Esophagus muscularis mucosa (tissue), 4 donors: ENCODE measurements at regions of chr15 and their contacts with region 1.

Region 1: DNA sequence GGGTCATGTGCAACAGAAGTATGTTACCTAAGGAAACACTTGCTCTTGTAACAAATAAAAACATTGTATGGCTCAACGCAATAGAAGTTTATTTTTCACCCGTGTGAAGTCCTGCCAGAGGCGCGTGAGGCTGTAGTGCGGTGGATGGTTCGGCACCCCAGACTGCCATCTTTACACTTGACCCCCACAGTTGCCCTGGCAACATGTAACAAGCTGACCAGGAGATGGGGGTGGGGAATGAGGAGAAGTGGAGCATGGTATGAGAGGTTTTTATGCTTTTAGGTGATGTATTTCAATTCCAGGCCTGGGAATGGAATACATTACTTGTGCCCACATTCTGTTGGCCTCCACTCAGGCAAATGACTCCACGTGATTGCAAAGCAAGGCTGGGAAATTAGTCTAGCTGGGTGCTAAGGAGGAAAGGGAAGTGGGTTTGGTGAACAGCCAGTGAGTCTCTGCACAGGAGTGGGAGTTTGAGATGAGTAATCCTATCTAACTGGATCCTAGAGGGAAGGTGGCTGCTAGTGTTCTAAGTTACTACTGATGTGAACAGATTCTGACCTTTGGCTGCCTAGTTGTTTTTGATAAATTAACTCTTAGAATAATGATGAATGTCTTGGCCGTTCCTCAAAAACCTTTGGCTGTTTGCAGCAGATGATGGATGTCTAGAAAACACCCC is 33.8 kb upstream of the GREM1 start:
- DNase-seq: no peak
- H3K4me3 ChIP-seq: no peak overlapping the region
- H3K27ac ChIP-seq: no peak overlapping the region
- H3K4me1 ChIP-seq: peaks cover 0 to 16% (median 7%) of the 10 kb centered on the region in 4 donors
- H3K27me3 ChIP-seq: no peaks in the 10 kb centered on the region
- CTCF ChIP-seq: no peak
- EP300 ChIP-seq: no peak
- POLR2A ChIP-seq: no peak

Region 2: DNA sequence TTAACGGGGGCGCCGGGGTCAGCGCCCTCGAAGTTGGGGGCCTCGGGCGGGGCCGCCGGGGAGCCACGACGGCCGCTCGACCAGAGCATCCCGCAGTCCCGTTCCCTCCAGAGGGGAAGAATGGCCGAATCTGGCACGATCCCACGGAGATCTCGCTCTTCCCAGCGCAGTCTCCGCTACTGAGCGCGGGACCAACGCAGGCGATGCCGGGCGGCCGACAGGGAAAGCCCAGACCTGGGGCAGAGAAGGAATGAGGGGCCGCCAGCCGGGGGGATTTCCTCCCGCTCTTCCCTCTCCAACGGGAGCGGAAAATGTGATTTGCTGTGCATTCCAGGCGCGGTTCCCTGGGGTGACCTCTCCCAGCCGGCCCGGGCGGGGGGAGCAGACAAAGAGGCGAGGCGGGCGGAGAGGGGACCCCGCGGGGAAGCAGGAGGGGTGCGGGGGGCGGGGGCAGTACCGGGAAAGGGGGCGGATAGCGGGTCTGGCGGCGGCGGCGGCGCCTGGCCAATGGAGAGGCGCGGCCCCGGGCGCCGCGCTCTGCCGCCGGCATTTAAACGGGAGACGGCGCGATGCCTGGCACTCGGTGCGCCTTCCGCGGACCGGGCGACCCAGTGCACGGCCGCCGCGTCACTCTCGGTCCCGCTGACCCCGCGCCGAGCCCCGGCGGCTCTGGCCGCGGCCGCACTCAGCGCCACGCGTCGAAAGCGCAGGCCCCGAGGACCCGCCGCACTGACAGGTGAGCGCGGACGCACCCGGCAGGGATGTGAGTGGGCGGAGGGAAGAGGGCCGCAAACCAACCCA is 33.6 kb after region 1 on chr15 and contains the start of gene GREM1:
- intact Hi-C with region 1: loop called (anchors 5 kb)
- DNase-seq: no peak
- H3K4me3 ChIP-seq: peak within 1 kb of the TSS; percentile 51 to 75 (median 61)
- H3K27ac ChIP-seq: peak within 1 kb of the TSS; percentile 71 to 80 (median 78)
- H3K4me1 ChIP-seq: peaks cover 10 to 40% (median 34%) of the 10 kb centered on the region in 4 donors
- H3K27me3 ChIP-seq: peaks cover 0 to 61% (median 11%) of the 10 kb centered on the region in 4 donors
- CTCF ChIP-seq: no peak
- EP300 ChIP-seq: no peak
- POLR2A ChIP-seq: no peak
- total RNA-seq, gene GREM1: 8.6 to 46.1 (median 37.0) TPM

Region 3: DNA sequence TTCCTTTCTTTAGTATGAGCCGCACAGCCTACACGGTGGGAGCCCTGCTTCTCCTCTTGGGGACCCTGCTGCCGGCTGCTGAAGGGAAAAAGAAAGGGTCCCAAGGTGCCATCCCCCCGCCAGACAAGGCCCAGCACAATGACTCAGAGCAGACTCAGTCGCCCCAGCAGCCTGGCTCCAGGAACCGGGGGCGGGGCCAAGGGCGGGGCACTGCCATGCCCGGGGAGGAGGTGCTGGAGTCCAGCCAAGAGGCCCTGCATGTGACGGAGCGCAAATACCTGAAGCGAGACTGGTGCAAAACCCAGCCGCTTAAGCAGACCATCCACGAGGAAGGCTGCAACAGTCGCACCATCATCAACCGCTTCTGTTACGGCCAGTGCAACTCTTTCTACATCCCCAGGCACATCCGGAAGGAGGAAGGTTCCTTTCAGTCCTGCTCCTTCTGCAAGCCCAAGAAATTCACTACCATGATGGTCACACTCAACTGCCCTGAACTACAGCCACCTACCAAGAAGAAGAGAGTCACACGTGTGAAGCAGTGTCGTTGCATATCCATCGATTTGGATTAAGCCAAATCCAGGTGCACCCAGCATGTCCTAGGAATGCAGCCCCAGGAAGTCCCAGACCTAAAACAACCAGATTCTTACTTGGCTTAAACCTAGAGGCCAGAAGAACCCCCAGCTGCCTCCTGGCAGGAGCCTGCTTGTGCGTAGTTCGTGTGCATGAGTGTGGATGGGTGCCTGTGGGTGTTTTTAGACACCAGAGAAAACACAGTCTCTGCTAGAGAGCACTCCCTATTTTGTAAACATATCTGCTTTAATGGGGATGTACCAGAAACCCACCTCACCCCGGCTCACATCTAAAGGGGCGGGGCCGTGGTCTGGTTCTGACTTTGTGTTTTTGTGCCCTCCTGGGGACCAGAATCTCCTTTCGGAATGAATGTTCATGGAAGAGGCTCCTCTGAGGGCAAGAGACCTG is 46.9 kb after region 1 on chr15:
- intact Hi-C with region 1: no loop called
- DNase-seq: no peak
- H3K4me3 ChIP-seq: no peak overlapping the region
- H3K27ac ChIP-seq: no peak overlapping the region
- H3K4me1 ChIP-seq: peaks cover 0 to 5% (median 0%) of the 10 kb centered on the region in 4 donors
- H3K27me3 ChIP-seq: no peaks in the 10 kb centered on the region
- CTCF ChIP-seq: no peak
- EP300 ChIP-seq: no peak
- POLR2A ChIP-seq: no peak

Region 4: DNA sequence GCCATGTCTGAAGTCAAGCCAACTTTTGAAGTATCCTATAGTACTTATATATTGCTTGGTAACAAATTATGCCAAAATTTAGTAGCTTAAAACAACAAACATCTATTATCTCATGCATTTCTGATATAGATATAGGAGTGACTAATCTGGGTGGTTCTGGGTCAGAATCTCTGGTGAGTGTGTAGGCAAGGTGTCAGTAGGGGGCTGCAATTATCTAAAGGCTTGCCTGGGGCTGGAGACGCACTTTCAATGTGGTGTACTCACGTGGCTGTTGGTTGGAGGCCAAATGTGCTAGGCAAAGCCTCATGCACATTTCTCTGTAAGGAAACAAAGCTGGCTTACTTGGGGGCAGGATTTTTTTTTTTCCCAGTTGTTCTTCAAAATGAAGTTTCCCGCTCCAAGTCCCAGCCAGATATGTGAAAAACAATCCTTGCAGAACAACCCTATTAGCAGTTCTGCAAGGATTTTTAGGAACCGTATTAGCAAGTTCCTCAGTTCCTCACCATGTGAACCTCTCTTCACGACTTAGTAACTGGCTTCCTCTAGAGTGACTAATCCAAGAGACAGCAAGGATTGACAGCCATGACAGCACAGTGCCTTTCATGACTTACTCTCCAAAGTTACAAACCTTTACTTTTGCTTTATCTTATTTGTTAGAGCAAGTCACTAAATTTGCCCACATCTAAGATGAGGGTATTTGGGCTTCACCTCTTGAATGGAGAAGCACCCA is 59.5 kb after region 1 on chr15:
- intact Hi-C with region 1: no loop called
- DNase-seq: no peak
- H3K4me3 ChIP-seq: no peak overlapping the region
- H3K27ac ChIP-seq: no peak overlapping the region
- H3K4me1 ChIP-seq: no peaks in the 10 kb centered on the region
- H3K27me3 ChIP-seq: no peaks in the 10 kb centered on the region
- CTCF ChIP-seq: no peak
- EP300 ChIP-seq: no peak
- POLR2A ChIP-seq: no peak